Right ventricle myocardium inferior (tissue), 1 donor: ENCODE measurements at regions of chr15 and their contacts with region 1.

Region 1: GRCh38 chr15:51335538-51336321 is 2.7 kb downstream of the CYP19A1 start:
- DNase-seq: no peak
- ATAC-seq: peak; percentile 42

Region 2: DNA sequence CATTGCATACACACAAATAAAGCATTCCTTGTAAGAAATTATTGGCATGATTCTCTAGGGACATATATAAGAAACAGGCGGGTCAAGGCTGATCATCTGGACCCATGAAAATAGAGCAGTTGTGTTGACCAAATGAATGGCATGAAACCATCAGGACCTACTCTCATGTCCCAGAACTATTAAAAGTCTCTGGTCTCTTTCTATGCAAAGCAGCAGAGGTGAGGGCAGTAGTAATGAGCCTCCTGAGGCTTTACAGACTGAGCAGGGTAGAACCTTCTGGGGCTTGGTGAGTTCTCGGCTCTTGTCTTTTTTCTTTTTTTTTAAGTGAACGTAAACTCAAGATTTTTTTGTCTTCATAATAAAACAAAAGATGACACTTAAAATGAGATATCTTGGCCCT is 15.0 kb after region 1 on chr15:
- intact Hi-C with region 1: loop called (anchors 2 kb)
- DNase-seq: no peak
- ATAC-seq: no peak